GM12878 (cell line): ENCODE measurements at regions of chr2 and their contacts with region 1.

Region 1: GRCh38 chr2:148048475-148049221 is 27.8 kb downstream of the MBD5 start:
- DNase-seq: peak; percentile 89
- ATAC-seq: peak; percentile 82
- H3K4me3 ChIP-seq: 0 out of 2 replicates have a peak overlapping the region, but pooled peaks have one; percentile 7
- H3K27ac ChIP-seq: peak overlapping the region; percentile 67
- H3K4me1 ChIP-seq: peaks cover 27% of the 10 kb centered on the region
- H3K27me3 ChIP-seq: no peaks in the 10 kb centered on the region
- CTCF ChIP-seq: no peak
- EP300 ChIP-seq: peak in 1 of 2 experiments; percentile 65; a peak in 1 of 4 replicates
- POLR2A ChIP-seq: no peak
- RAD21 ChIP-seq: no peak; the same call in 1 of the 2 replicates

Region 2: GRCh38 chr2:148020111-148021058 is 28.3 kb before region 1 on chr2 and contains the start of gene ORC4:
- CTCF ChIA-PET with region 1: interaction called, 11 read pairs
- POLR2A ChIA-PET with region 1: interaction called, 57 read pairs
- RAD21 ChIA-PET with region 1: interaction called, 90 read pairs
- SMC1A ChIA-PET with region 1: interaction called, 177 read pairs
- in situ Hi-C with region 1: no loop called
- intact Hi-C with region 1: loop called (anchors 2 kb)
- DNase-seq: peak; percentile 99
- ATAC-seq: peak; percentile 81
- H3K4me3 ChIP-seq: peak within 1 kb of the TSS; percentile 99
- H3K27ac ChIP-seq: peak within 1 kb of the TSS; percentile 96
- H3K4me1 ChIP-seq: no peaks in the 10 kb centered on the region
- H3K27me3 ChIP-seq: no peaks in the 10 kb centered on the region
- CTCF ChIP-seq: peak in 2 of 3 experiments; percentile 19 to 26; a peak in 2 of 6 replicates
- EP300 ChIP-seq: no peak; a peak in 1 of 4 replicates
- POLR2A ChIP-seq: peak; percentile 90
- RAD21 ChIP-seq: peak; percentile 19; the same call in 1 of the 2 replicates
- polyA plus RNA-seq, gene ORC4: 31.3 to 71.3 TPM

Region 3: GRCh38 chr2:148027822-148028221 is 20.8 kb before region 1 on chr2:
- CTCF ChIA-PET with region 1: interaction called, 11 read pairs
- POLR2A ChIA-PET with region 1: interaction called, 57 read pairs
- RAD21 ChIA-PET with region 1: interaction called, 90 read pairs
- SMC1A ChIA-PET with region 1: interaction called, 177 read pairs
- in situ Hi-C with region 1: no loop called
- intact Hi-C with region 1: no loop called
- DNase-seq: no peak
- ATAC-seq: peak; percentile 49
- H3K4me3 ChIP-seq: no peak overlapping the region
- H3K27ac ChIP-seq: no peak overlapping the region
- H3K4me1 ChIP-seq: no peaks in the 10 kb centered on the region
- H3K27me3 ChIP-seq: no peaks in the 10 kb centered on the region
- CTCF ChIP-seq: no peak
- EP300 ChIP-seq: no peak
- POLR2A ChIP-seq: no peak
- RAD21 ChIP-seq: no peak

Region 4: DNA sequence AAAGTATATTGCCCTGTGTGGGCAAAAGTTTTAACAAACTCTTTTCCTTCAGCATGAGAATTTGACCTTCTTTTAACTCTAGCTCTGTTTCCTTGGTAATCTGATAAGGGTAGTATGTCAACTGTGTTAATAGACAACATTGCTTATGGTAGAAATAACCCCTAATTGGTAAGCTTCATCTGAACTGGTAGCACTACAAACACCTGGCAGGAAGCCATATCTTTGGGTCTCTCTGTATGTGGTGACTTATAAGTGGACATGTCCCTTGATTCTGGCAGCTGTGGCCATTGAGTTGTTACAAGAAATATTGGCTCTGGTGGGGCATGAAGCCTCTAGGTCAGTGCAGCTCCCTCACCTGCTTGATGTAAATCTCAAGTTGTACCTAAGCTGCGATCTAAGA is 19.2 kb after region 1 on chr2:
- CTCF ChIA-PET with region 1: interaction called, 5 read pairs
- POLR2A ChIA-PET with region 1: interaction called, 3 read pairs
- RAD21 ChIA-PET with region 1: interaction called, 5 read pairs
- SMC1A ChIA-PET with region 1: interaction called, 10 read pairs
- in situ Hi-C with region 1: no loop called
- intact Hi-C with region 1: no loop called
- DNase-seq: no peak
- ATAC-seq: no peak
- H3K4me3 ChIP-seq: no peak overlapping the region
- H3K27ac ChIP-seq: no peak overlapping the region
- H3K4me1 ChIP-seq: no peaks in the 10 kb centered on the region
- H3K27me3 ChIP-seq: no peaks in the 10 kb centered on the region
- CTCF ChIP-seq: no peak
- EP300 ChIP-seq: no peak
- POLR2A ChIP-seq: no peak
- RAD21 ChIP-seq: no peak